Thyroid gland (tissue), 4 donors: ENCODE measurements at regions of chr21 and their contacts with region 1.

Region 1: DNA sequence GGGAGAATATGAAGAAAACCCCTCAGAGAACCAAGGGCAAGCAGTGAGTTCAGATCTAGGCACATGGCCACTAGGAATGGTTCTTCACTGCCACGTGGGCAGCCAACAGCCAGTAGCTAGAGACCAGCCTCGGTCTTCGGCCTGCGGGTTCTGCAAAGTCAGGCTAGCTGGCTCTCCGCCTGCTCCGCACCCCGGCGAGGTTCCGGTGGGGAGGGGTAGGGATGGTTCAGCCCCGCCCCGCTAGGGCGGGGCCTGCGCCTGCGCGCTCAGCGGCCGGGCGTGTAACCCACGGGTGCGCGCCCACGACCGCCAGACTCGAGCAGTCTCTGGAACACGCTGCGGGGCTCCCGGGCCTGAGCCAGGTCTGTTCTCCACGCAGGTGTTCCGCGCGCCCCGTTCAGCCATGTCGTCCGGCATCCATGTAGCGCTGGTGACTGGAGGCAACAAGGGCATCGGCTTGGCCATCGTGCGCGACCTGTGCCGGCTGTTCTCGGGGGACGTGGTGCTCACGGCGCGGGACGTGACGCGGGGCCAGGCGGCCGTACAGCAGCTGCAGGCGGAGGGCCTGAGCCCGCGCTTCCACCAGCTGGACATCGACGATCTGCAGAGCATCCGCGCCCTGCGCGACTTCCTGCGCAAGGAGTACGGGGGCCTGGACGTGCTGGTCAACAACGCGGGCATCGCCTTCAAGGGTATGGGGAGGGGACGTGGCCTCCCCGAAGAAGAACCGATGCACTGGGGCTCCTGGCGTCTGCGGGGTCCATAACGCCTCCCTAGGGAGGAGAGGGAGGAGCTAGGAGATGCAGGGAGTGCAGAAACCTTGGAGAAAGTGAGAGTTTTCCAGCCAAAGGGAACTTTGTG is at the start of gene CBR1:
- DNase-seq: peak; percentile 92 to 95
- H3K4me3 ChIP-seq: peak within 1 kb of the TSS; percentile 11 to 80 (median 52)
- H3K27ac ChIP-seq: peak within 1 kb of the TSS; percentile 65 to 79 (median 72)
- H3K4me1 ChIP-seq: peaks cover 18 to 56% of the 10 kb centered on the region in 2 donors
- H3K27me3 ChIP-seq: no peaks in the 10 kb centered on the region
- CTCF ChIP-seq: peak in 1 of 6 experiments; percentile 14
- POLR2A ChIP-seq: peak; percentile 75 to 93
- total RNA-seq, gene CBR1: 206 to 600 (median 418) TPM

Region 2: GRCh38 chr21:36113647-36114428 is 43.9 kb after region 1 on chr21:
- intact Hi-C with region 1: loop called (anchors 5 kb)
- DNase-seq: no peak
- H3K4me3 ChIP-seq: no peak overlapping the region
- H3K27ac ChIP-seq: no peak overlapping the region
- H3K4me1 ChIP-seq: peaks cover 0 to 4% of the 10 kb centered on the region in 2 donors
- H3K27me3 ChIP-seq: no peaks in the 10 kb centered on the region
- CTCF ChIP-seq: no peak
- POLR2A ChIP-seq: no peak

Region 3: GRCh38 chr21:36310016-36310415 is 240.1 kb after region 1 on chr21:
- intact Hi-C with region 1: loop called (anchors 5 kb)
- DNase-seq: no peak
- H3K4me3 ChIP-seq: no peak overlapping the region
- H3K27ac ChIP-seq: no peak overlapping the region
- H3K4me1 ChIP-seq: no peaks in the 10 kb centered on the region
- H3K27me3 ChIP-seq: no peaks in the 10 kb centered on the region
- CTCF ChIP-seq: no peak
- POLR2A ChIP-seq: no peak